ENCODE measurements at regions of chr11 and their contacts with region 1.

Region 1: DNA sequence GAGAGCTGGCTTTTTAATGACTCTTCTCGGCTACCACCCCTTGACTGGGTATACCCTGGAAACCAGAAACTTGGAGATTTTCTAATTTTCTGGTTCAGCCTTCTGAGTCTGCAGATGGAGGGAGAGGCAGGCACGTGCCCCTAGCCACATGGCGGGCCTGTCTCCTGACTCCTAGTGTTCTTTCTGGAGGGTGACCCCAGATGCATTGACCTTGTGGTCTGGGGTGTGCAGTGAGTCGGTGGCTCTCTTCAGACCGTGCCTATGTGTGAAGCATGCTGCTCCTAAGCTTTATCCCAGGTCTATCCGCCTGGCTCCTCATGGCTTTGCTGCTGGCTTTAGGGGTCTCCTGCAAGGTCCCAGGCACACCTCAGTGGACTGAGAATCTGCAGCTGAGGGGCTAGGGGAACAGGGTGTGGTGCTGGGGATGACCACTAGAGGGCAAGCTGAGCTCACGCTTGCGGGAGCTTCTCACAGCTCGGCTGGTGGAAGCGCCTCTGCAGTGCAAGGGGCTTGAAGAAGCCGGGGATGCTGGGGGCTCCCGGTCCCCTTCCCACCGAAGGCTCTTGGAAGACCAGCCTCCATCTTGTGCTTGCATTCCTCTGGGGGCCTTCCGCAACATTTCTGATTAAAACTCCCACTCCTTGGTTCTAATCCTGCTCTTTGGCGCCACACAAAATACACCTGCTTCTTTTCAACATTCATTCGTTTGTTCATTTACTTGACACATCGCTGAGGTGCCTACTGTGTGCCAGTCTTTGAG is 51.8 kb downstream of the OTOG start:
- DNase-seq: no peak
- H3K4me3 ChIP-seq: no peak overlapping the region
- H3K27me3 ChIP-seq: no peaks in the 10 kb centered on the region
- CTCF ChIP-seq: peak; percentile 99

Region 2: GRCh38 chr11:17588166-17588565 is 10.7 kb before region 1 on chr11:
- CTCF ChIA-PET with region 1: interaction called, 14 read pairs
- POLR2A ChIA-PET with region 1: interaction called, 3 read pairs
- DNase-seq: no peak
- H3K4me3 ChIP-seq: no peak overlapping the region
- H3K27me3 ChIP-seq: peaks cover 2% of the 10 kb centered on the region; the same call in 1 of the 2 replicates
- CTCF ChIP-seq: no peak

Measured in BJ (cell line).